ENCODE measurements at regions of chr20 and their contacts with region 1.

Region 1: GRCh38 chr20:54475334-54476168 is at the start of gene DOK5:
- DNase-seq: peak; percentile 52
- H3K4me3 ChIP-seq: peak within 1 kb of the TSS; percentile 61
- H3K27ac ChIP-seq: no peak within 1 kb of the TSS
- H3K4me1 ChIP-seq: peaks cover 30% of the 10 kb centered on the region
- H3K27me3 ChIP-seq: no peaks in the 10 kb centered on the region
- CTCF ChIP-seq: no peak
- total RNA-seq, gene DOK5: 4.9 and 5.4 TPM in 2 replicates

Region 2: GRCh38 chr20:54219751-54220426 is 255.7 kb before region 1 on chr20:
- CTCF ChIA-PET with region 1: interaction called, 6 read pairs
- POLR2A ChIA-PET with region 1: no interaction called
- intact Hi-C with region 1: loop called (anchors 5 kb)
- DNase-seq: peak; percentile 62
- H3K4me3 ChIP-seq: no peak overlapping the region
- H3K27ac ChIP-seq: no peak overlapping the region
- H3K4me1 ChIP-seq: no peaks in the 10 kb centered on the region
- H3K27me3 ChIP-seq: no peaks in the 10 kb centered on the region
- CTCF ChIP-seq: peak; percentile 70

Region 3: GRCh38 chr20:54624706-54625390 is 149.3 kb after region 1 on chr20:
- CTCF ChIA-PET with region 1: no interaction called
- POLR2A ChIA-PET with region 1: no interaction called
- intact Hi-C with region 1: loop called (anchors 5 kb)
- DNase-seq: peak; percentile 55
- H3K4me3 ChIP-seq: no peak overlapping the region
- H3K27ac ChIP-seq: no peak overlapping the region
- H3K4me1 ChIP-seq: peaks cover 29% of the 10 kb centered on the region
- H3K27me3 ChIP-seq: no peaks in the 10 kb centered on the region
- CTCF ChIP-seq: no peak